Transverse colon (tissue), 4 donors: ENCODE measurements at regions of chr3 and their contacts with region 1.

Region 1: GRCh38 chr3:184727357-184728009 is 15.6 kb upstream of the MAGEF1 start:
- DNase-seq: peak; percentile 65
- H3K4me3 ChIP-seq: no peak overlapping the region
- H3K27ac ChIP-seq: no peak overlapping the region
- H3K4me1 ChIP-seq: no peaks in the 10 kb centered on the region
- H3K27me3 ChIP-seq: no peaks in the 10 kb centered on the region
- CTCF ChIP-seq: peak; percentile 68 to 74 (median 72)
- EP300 ChIP-seq: no peak
- POLR2A ChIP-seq: no peak

Region 2: GRCh38 chr3:183766745-183767606 is 960.5 kb before region 1 on chr3:
- in situ Hi-C with region 1: no loop called
- intact Hi-C with region 1: no loop called
- DNase-seq: peak; percentile 83
- H3K4me3 ChIP-seq: no peak overlapping the region
- H3K27ac ChIP-seq: no peak overlapping the region
- H3K4me1 ChIP-seq: peaks cover 0 to 12% (median 0%) of the 10 kb centered on the region in 4 donors
- H3K27me3 ChIP-seq: no peaks in the 10 kb centered on the region
- CTCF ChIP-seq: peak; percentile 76 to 85 (median 82)
- EP300 ChIP-seq: no peak
- POLR2A ChIP-seq: no peak

Region 3: DNA sequence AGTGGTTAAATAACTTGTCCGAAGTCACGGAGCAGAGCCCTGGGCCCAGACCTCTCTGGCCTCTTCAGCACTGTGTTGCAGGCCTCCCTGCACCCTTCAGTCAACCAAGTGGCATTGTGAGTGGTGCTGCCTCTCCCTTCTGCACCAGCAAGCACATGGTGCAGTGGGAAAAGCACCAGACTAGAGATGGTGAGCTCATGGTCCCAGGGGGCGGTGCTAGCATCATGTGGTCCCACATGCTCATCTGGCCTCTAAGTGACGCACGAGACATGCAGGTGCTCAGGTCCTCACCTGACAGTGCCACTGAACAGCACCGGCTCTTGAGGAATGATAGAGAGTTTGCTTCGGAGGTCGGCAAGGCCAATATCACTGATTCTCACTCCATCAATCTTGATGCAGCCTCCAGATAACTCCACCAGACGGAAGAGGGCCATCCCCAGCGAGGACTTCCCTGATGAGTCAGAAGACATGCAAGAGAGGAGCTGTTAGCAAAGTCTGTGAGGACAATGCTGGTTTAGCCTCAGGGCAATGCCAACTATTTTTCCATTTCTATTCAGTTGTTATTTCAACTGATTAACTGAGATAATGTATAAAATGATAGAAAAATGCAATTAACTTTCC is 789.8 kb before region 1 on chr3:
- in situ Hi-C with region 1: no loop called
- intact Hi-C with region 1: no loop called
- DNase-seq: no peak
- H3K4me3 ChIP-seq: no peak overlapping the region
- H3K27ac ChIP-seq: no peak overlapping the region
- H3K4me1 ChIP-seq: no peaks in the 10 kb centered on the region
- H3K27me3 ChIP-seq: no peaks in the 10 kb centered on the region
- CTCF ChIP-seq: no peak
- EP300 ChIP-seq: no peak
- POLR2A ChIP-seq: no peak

Region 4: GRCh38 chr3:184469423-184469822 is 258.1 kb before region 1 on chr3:
- in situ Hi-C with region 1: no loop called
- intact Hi-C with region 1: no loop called
- DNase-seq: peak; percentile 23
- H3K4me3 ChIP-seq: no peak overlapping the region
- H3K27ac ChIP-seq: no peak overlapping the region
- H3K4me1 ChIP-seq: peaks cover 0 to 8% (median 5%) of the 10 kb centered on the region in 4 donors
- H3K27me3 ChIP-seq: peaks cover 6% of the 10 kb centered on the region
- CTCF ChIP-seq: peak; percentile 2 to 58 (median 51)
- EP300 ChIP-seq: no peak
- POLR2A ChIP-seq: no peak

Region 5: GRCh38 chr3:184496937-184497336 is 230.5 kb before region 1 on chr3:
- in situ Hi-C with region 1: no loop called
- intact Hi-C with region 1: no loop called
- DNase-seq: no peak
- H3K4me3 ChIP-seq: no peak overlapping the region
- H3K27ac ChIP-seq: no peak overlapping the region
- H3K4me1 ChIP-seq: peaks cover 0 to 5% (median 0%) of the 10 kb centered on the region in 4 donors
- H3K27me3 ChIP-seq: peaks cover 45% of the 10 kb centered on the region
- CTCF ChIP-seq: no peak
- EP300 ChIP-seq: no peak
- POLR2A ChIP-seq: no peak

Region 6: GRCh38 chr3:184561061-184561912 is 166.2 kb before region 1 on chr3 and contains the start of gene EPHB3:
- in situ Hi-C with region 1: no loop called
- intact Hi-C with region 1: loop called (anchors 1 kb)
- DNase-seq: peak; percentile 99
- H3K4me3 ChIP-seq: peak within 1 kb of the TSS; percentile 61 to 77 (median 69)
- H3K27ac ChIP-seq: peak within 1 kb of the TSS; percentile 76 to 88 (median 83)
- H3K4me1 ChIP-seq: peaks cover 17 to 68% (median 46%) of the 10 kb centered on the region in 4 donors
- H3K27me3 ChIP-seq: no peaks in the 10 kb centered on the region
- CTCF ChIP-seq: peak; percentile 94 to 100 (median 98)
- EP300 ChIP-seq: no peak
- POLR2A ChIP-seq: peak; percentile 95
- total RNA-seq, gene EPHB3: 4.1 to 17.7 (median 6.7) TPM

Region 7: DNA sequence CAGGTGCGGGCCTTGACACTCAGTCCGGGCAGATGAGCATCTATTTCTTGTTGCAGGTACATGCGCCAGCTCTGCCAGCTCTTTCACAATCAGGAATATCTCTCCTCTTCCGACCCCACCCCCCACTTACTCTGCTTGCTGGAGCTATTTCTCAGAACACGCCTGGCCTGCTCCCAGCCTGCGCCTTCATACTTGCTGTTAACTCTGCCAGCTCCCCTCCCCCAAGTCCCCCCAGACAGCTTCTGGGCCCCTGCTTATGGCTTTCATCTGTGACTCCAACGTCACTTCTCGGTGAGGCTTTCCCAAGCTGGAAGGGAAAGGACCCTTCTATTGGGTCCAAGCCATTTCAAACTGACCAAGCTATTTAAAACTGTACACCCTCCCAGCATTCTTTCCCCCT is 30.8 kb before region 1 on chr3:
- in situ Hi-C with region 1: no loop called
- intact Hi-C with region 1: loop called (anchors 2 kb)
- DNase-seq: no peak
- H3K4me3 ChIP-seq: no peak overlapping the region
- H3K27ac ChIP-seq: no peak overlapping the region
- H3K4me1 ChIP-seq: peaks cover 2 to 11% (median 4%) of the 10 kb centered on the region in 4 donors
- H3K27me3 ChIP-seq: no peaks in the 10 kb centered on the region
- CTCF ChIP-seq: no peak
- EP300 ChIP-seq: no peak
- POLR2A ChIP-seq: no peak